MCF 10A (cell line): ENCODE measurements at regions of chr22 and their contacts with region 1.

Region 1: DNA sequence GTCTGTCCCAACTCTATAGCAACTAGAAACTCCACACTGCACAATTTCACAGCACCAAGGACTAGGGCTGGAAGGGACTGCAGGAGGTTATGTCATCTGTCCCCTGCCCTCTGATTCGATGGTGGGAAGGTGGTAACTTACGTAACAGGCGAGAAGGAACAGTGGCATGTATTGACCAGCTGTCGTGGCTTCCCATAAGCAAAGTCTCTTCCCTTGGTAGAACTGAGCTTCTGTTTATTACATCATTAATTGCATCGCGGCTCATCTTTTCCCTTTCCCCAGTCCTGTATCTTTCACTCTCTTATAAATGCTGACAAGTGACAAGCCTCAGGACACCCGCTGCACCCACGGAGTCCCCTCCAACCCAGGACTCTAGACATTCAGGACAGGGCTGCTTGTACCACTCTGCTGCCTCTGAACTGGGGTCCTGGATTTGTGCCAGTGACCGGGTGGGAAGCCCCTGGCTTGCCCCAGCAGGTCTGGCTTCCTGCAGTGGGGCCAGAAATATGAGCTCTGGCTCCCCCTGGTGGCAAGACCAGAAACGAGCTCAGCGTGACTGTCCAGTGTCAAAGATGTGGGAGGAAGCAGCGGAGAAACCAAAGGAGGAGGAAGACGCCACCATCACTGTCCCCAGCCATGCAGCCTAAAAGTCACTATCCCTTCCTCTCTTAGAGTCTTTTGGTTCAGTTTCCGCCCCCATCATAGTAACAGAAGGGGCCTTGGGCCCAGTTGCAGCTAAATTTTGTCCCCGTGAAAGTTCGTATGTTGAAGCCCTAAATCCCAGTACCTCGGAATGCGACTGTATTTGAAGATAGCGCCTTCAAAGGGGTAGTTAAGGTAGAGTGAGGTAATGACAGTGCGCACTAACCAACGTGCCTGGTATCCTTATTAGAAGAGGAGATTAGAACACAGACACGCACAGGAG is 84.5 kb downstream of the ISX start:
- DNase-seq: peak; percentile 50
- H3K4me3 Mint-ChIP-seq: no peak overlapping the region
- H3K27ac Mint-ChIP-seq: peak overlapping the region; percentile 16
- H3K4me1 Mint-ChIP-seq: no peaks in the 10 kb centered on the region
- H3K27me3 Mint-ChIP-seq: peaks cover 25% of the 10 kb centered on the region
- CTCF ChIP-seq: peak; percentile 76

Region 2: DNA sequence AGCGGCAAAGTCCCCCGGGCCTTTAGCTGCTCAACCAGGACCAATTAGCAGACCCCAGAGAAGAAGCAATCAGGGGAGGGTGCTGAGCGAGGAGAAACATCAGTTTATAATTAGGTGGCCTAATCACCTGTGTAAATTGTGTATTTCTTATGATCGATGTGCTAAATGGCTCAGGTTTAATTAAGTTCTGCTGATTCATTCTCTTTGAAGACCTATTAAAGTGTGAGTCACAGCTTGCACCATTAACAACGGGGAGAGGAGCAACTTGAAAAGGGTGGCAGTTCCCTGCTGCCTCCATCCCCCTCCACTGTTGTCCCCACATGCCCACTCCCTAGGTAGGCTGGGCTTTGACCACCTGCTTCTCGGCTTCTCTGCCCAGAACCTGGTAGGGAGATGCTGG is 73.8 kb before region 1 on chr22:
- CTCF ChIA-PET with region 1: no interaction called
- POLR2A ChIA-PET with region 1: no interaction called
- intact Hi-C with region 1: no loop called
- DNase-seq: no peak
- H3K4me3 Mint-ChIP-seq: no peak overlapping the region
- H3K27ac Mint-ChIP-seq: no peak overlapping the region
- H3K4me1 Mint-ChIP-seq: no peaks in the 10 kb centered on the region
- H3K27me3 Mint-ChIP-seq: no peaks in the 10 kb centered on the region
- CTCF ChIP-seq: no peak

Region 3: GRCh38 chr22:35119494-35119893 is 31.0 kb before region 1 on chr22:
- CTCF ChIA-PET with region 1: interaction called, 11 read pairs
- POLR2A ChIA-PET with region 1: no interaction called
- intact Hi-C with region 1: no loop called
- DNase-seq: no peak
- H3K4me3 Mint-ChIP-seq: no peak overlapping the region
- H3K27ac Mint-ChIP-seq: no peak overlapping the region
- H3K4me1 Mint-ChIP-seq: no peaks in the 10 kb centered on the region
- H3K27me3 Mint-ChIP-seq: no peaks in the 10 kb centered on the region
- CTCF ChIP-seq: no peak

Region 4: DNA sequence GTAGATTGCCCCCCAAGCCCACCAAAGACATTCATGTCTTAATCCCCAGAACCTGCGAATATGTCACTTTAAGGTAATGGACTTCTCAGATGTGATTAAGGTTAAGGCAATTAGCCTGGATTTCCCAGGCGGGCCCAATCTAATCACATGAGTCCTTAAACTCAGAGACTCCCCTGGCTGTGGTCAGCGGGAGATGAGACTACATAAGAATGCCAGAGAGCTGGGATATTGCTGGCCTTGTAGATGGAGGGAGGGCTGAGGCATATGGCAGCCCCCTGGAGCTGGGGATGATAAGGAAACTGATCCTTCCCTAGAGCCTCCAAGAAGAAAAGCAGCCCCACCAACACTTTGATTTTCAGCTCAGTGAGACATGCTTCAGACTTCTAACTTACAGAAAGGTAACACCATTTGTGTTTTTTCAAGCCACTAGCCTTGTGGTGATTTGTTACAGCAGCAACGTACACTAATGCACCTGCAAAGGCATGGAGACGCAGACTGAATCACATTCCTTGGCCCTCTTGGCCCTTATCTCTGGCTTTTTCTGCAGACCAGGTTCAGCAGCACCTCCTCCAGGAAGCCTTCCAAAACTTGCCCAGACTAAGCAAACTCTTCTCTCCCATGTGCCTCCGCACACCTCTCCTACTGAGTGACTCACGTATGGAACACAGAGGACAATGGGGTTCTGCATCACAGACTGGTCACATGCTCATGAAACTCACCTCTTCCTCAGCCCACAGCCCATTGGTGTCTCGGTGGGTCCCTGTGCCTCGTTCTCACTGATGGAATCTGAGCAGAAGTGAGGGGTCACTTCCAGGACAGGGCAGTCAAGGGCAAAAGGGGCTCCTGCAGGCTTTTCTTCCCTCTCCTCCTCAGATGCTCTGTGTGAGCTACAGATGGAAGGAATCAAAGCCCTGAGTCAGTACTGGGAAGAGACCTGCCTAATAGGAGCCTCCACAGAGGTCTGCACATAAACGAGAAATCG is 20.6 kb after region 1 on chr22:
- CTCF ChIA-PET with region 1: interaction called, 18 read pairs
- POLR2A ChIA-PET with region 1: no interaction called
- intact Hi-C with region 1: no loop called
- DNase-seq: no peak
- H3K4me3 Mint-ChIP-seq: no peak overlapping the region
- H3K27ac Mint-ChIP-seq: no peak overlapping the region
- H3K4me1 Mint-ChIP-seq: no peaks in the 10 kb centered on the region
- H3K27me3 Mint-ChIP-seq: peaks cover 11% of the 10 kb centered on the region
- CTCF ChIP-seq: no peak